Dorsolateral prefrontal cortex (tissue), 120 donors: ENCODE measurements at regions of chr1 and their contacts with region 1.

Region 1: GRCh38 chr1:45686317-45687013 is at the start of gene GPBP1L1:
- DNase-seq: peak; percentile 95 to 99 (median 97)
- H3K4me3 ChIP-seq: peak within 1 kb of the TSS; percentile 63 to 100 (median 97)
- H3K27ac ChIP-seq: peak within 1 kb of the TSS; percentile 89 to 99 (median 98)
- H3K27me3 ChIP-seq: no peaks in the 10 kb centered on the region
- CTCF ChIP-seq: peak in 18 of 56 donors; percentile 4 to 39 (median 12)
- total RNA-seq, gene GPBP1L1: 67.0 to 120 (median 87.2) TPM

Region 2: GRCh38 chr1:45205910-45206721 is 480.3 kb before region 1 on chr1 and contains the start of gene ZSWIM5:
- intact Hi-C with region 1: loop called (anchors 5 kb)
- DNase-seq: peak; percentile 48 to 87 (median 71)
- H3K4me3 ChIP-seq: peak within 1 kb of the TSS; percentile 66 to 96 (median 89)
- H3K27ac ChIP-seq: peak within 1 kb of the TSS; percentile 79 to 98 (median 95)
- H3K27me3 ChIP-seq: no peaks in the 10 kb centered on the region
- CTCF ChIP-seq: peak in 5 of 56 donors; percentile 9 to 29 (median 13)
- total RNA-seq, gene ZSWIM5: 5.6 to 11.4 (median 8.0) TPM

Region 3: GRCh38 chr1:45521398-45522323 is 164.8 kb before region 1 on chr1 and contains the start of gene PRDX1:
- intact Hi-C with region 1: loop called in 1 of 2 experiments (anchors 2 kb)
- DNase-seq: peak; percentile 93 to 99 (median 97)
- H3K4me3 ChIP-seq: peak within 1 kb of the TSS; percentile 67 to 100 (median 97)
- H3K27ac ChIP-seq: peak within 1 kb of the TSS; percentile 80 to 100 (median 97)
- H3K27me3 ChIP-seq: no peaks in the 10 kb centered on the region
- CTCF ChIP-seq: peak in 40 of 56 donors; percentile 10 to 63 (median 35)
- total RNA-seq, gene PRDX1: 252 to 454 (median 339) TPM

Region 4: DNA sequence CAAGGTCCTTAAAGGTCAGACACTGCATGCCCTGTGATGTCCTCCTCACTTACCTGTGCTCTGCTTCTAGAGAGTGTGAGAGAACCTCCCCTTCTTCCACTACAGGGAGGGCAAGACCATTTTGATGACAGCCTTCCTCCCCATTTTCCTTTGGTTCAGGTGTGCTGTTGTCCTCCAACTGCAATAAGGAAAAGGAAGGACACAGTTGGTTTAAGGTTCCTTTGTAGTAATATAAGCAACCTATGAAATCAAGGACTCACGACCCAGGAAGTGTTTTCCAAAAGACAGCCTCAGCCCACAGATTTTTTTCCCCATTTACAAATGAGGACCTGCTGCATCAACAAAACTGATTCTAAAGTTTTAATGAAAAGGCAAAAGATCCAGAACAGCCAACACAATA is 56.0 kb before region 1 on chr1:
- intact Hi-C with region 1: loop called in 1 of 2 experiments (anchors 5 kb)
- DNase-seq: no peak
- H3K4me3 ChIP-seq: no peak overlapping the region
- H3K27ac ChIP-seq: peak overlapping the region in 50 of 59 donors; percentile 24 to 83 (median 64)
- H3K27me3 ChIP-seq: no peaks in the 10 kb centered on the region
- CTCF ChIP-seq: no peak

Region 5: DNA sequence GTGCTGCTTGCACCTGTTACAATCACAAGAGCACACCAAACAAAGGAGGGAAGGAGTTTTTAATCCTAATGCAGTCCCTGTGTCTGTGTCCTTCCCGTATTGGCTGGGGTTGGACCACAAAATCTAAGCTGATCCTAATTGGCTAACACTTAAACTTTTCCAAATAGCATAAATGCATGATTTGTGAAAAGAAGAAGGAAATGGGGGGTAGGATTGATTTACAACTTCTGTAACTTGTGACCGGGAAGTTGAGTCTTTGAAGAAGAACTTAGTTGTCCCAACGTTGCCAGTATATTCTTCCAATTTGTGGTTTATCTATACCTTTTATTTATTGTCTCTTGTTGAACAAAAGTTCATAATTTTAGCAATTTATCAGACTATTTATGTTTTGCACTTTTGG is 75.8 kb after region 1 on chr1:
- intact Hi-C with region 1: no loop called
- DNase-seq: no peak
- H3K4me3 ChIP-seq: no peak overlapping the region
- H3K27ac ChIP-seq: no peak overlapping the region
- H3K27me3 ChIP-seq: no peaks in the 10 kb centered on the region
- CTCF ChIP-seq: no peak

Region 6: GRCh38 chr1:45803301-45803780 is 116.9 kb after region 1 on chr1 and contains the start of gene MAST2:
- intact Hi-C with region 1: loop called (anchors 5 kb)
- DNase-seq: peak; percentile 73 to 92 (median 84)
- H3K4me3 ChIP-seq: peak within 1 kb of the TSS; percentile 45 to 78 (median 64)
- H3K27ac ChIP-seq: peak within 1 kb of the TSS in 43 of 59 donors; percentile 8 to 86 (median 61)
- H3K27me3 ChIP-seq: no peaks in the 10 kb centered on the region
- CTCF ChIP-seq: peak in 5 of 56 donors; percentile 4 to 27 (median 13)
- total RNA-seq, gene MAST2: 30.0 to 79.1 (median 44.2) TPM

Region 7: GRCh38 chr1:46070164-46070814 is 383.8 kb after region 1 on chr1:
- intact Hi-C with region 1: no loop called
- DNase-seq: no peak
- H3K4me3 ChIP-seq: no peak overlapping the region
- H3K27ac ChIP-seq: no peak overlapping the region
- H3K27me3 ChIP-seq: no peaks in the 10 kb centered on the region
- CTCF ChIP-seq: no peak

Region 8: GRCh38 chr1:46247436-46248121 is 561.1 kb after region 1 on chr1 and contains the start of gene RAD54L:
- intact Hi-C with region 1: loop called in 1 of 2 experiments (anchors 10 kb)
- DNase-seq: peak; percentile 91 to 98 (median 98)
- H3K4me3 ChIP-seq: peak within 1 kb of the TSS; percentile 57 to 98 (median 76)
- H3K27ac ChIP-seq: peak within 1 kb of the TSS in 17 of 59 donors; percentile 8 to 76 (median 41)
- H3K27me3 ChIP-seq: no peaks in the 10 kb centered on the region
- CTCF ChIP-seq: peak in 3 of 56 donors; percentile 10 to 18 (median 13)
- total RNA-seq, gene RAD54L: 0.89 to 10.5 (median 4.8) TPM